ENCODE measurements at regions of chr9 and their contacts with region 1.

Region 1: GRCh38 chr9:128771745-128772519 is at the start of gene ZER1:
- DNase-seq: peak; percentile 100
- H3K27ac ChIP-seq: peak within 1 kb of the TSS; percentile 91
- CTCF ChIP-seq: no peak

Region 2: GRCh38 chr9:128412120-128412790 is 359.7 kb before region 1 on chr9:
- CTCF ChIA-PET with region 1: no interaction called
- POLR2A ChIA-PET with region 1: no interaction called
- DNase-seq: no peak
- H3K27ac ChIP-seq: no peak overlapping the region
- CTCF ChIP-seq: peak; percentile 41

Region 3: GRCh38 chr9:128688512-128689292 is 83.2 kb before region 1 on chr9 and contains the start of gene SET:
- CTCF ChIA-PET with region 1: no interaction called
- POLR2A ChIA-PET with region 1: no interaction called
- DNase-seq: peak; percentile 100
- H3K27ac ChIP-seq: peak within 1 kb of the TSS; percentile 98
- CTCF ChIP-seq: no peak

Region 4: GRCh38 chr9:128747234-128747633 is 24.7 kb before region 1 on chr9:
- CTCF ChIA-PET with region 1: no interaction called
- POLR2A ChIA-PET with region 1: no interaction called
- DNase-seq: no peak
- H3K27ac ChIP-seq: no peak overlapping the region; the same call in 1 of the 2 replicates
- CTCF ChIP-seq: no peak

Region 5: GRCh38 chr9:129761901-129762364 is 990.0 kb after region 1 on chr9:
- CTCF ChIA-PET with region 1: no interaction called
- POLR2A ChIA-PET with region 1: interaction called, 12 read pairs
- DNase-seq: no peak
- H3K27ac ChIP-seq: no peak overlapping the region
- CTCF ChIP-seq: no peak